GM12878 (cell line): ENCODE measurements at regions of chr4 and their contacts with region 1.

Region 1: GRCh38 chr4:22515145-22515887 is 550 bp downstream of the ADGRA3 start:
- DNase-seq: no peak
- ATAC-seq: peak; percentile 42
- H3K4me3 ChIP-seq: no peak overlapping the region
- H3K27ac ChIP-seq: no peak overlapping the region
- H3K4me1 ChIP-seq: no peaks in the 10 kb centered on the region
- H3K27me3 ChIP-seq: peaks cover 0 to 3% of the 10 kb centered on the region in 2 experiments; a peak in 1 of 4 replicates
- CTCF ChIP-seq: no peak; a peak in 1 of 6 replicates
- EP300 ChIP-seq: no peak
- POLR2A ChIP-seq: no peak
- RAD21 ChIP-seq: no peak

Region 2: DNA sequence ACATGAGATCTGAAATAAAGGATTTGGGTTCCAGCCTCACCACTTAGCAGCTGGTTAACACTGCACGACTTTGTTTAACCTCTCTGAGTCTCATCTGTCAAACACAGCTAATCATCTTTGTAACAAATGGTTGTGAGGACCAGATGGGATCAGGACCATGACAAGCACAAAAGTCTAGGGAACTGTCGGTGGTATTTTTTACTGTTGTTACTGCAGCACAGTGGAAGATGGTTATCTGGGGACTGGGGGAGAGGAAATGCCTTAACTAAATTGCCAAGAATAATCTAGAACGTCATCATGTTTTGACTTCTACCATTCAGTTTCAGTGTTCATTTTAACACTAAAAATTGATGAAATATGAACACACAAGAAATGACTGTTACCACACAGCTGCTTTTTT is 98.9 kb before region 1 on chr4:
- CTCF ChIA-PET with region 1: interaction called, 10 read pairs
- POLR2A ChIA-PET with region 1: no interaction called
- RAD21 ChIA-PET with region 1: interaction called, 3 read pairs
- SMC1A ChIA-PET with region 1: no interaction called
- in situ Hi-C with region 1: no loop called
- intact Hi-C with region 1: loop called (anchors 5 kb)
- DNase-seq: no peak
- ATAC-seq: no peak; the same call in 2 of the 3 replicates
- H3K4me3 ChIP-seq: no peak overlapping the region
- H3K27ac ChIP-seq: no peak overlapping the region
- H3K4me1 ChIP-seq: no peaks in the 10 kb centered on the region
- H3K27me3 ChIP-seq: no peaks in the 10 kb centered on the region
- CTCF ChIP-seq: no peak
- EP300 ChIP-seq: no peak
- POLR2A ChIP-seq: no peak
- RAD21 ChIP-seq: no peak

Region 3: GRCh38 chr4:22500831-22501719 is 14.2 kb before region 1 on chr4:
- CTCF ChIA-PET with region 1: interaction called, 6 read pairs
- POLR2A ChIA-PET with region 1: interaction called, 14 read pairs
- RAD21 ChIA-PET with region 1: interaction called, 12 read pairs
- SMC1A ChIA-PET with region 1: interaction called, 33 read pairs
- in situ Hi-C with region 1: no loop called
- intact Hi-C with region 1: no loop called
- DNase-seq: peak; percentile 28
- ATAC-seq: peak; percentile 77
- H3K4me3 ChIP-seq: no peak overlapping the region
- H3K27ac ChIP-seq: no peak overlapping the region
- H3K4me1 ChIP-seq: no peaks in the 10 kb centered on the region
- H3K27me3 ChIP-seq: no peaks in the 10 kb centered on the region
- CTCF ChIP-seq: no peak
- EP300 ChIP-seq: peak in 1 of 2 experiments; percentile 70; a peak in 1 of 4 replicates
- POLR2A ChIP-seq: no peak
- RAD21 ChIP-seq: no peak

Region 4: DNA sequence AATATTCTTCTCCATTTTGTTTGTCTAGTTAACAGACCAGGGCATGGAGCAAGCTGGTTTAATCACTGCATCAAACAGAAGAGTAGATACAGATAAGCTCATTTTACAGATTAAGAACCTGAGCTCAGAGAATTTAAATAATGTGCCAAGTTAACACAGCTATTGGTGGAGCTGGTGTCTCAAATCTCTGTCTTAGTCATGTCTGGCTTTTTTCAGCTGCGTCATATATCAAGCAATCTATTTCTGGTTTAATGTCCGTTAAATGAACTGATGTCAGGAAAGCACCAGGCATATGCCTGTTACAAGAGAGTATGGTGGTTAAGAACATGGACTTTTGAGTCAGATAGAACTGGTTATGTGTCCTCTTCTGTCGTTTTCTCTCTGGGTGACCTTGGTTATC is 80.4 kb after region 1 on chr4:
- CTCF ChIA-PET with region 1: interaction called, 7 read pairs
- POLR2A ChIA-PET with region 1: interaction called, 8 read pairs
- RAD21 ChIA-PET with region 1: interaction called, 7 read pairs
- SMC1A ChIA-PET with region 1: interaction called, 5 read pairs
- in situ Hi-C with region 1: no loop called
- intact Hi-C with region 1: loop called (anchors 5 kb)
- DNase-seq: peak; percentile 17
- ATAC-seq: peak; percentile 84
- H3K4me3 ChIP-seq: no peak overlapping the region
- H3K27ac ChIP-seq: no peak overlapping the region
- H3K4me1 ChIP-seq: no peaks in the 10 kb centered on the region
- H3K27me3 ChIP-seq: no peaks in the 10 kb centered on the region
- CTCF ChIP-seq: no peak
- EP300 ChIP-seq: peak; percentile 58 to 75; a peak in 2 of 4 replicates
- POLR2A ChIP-seq: no peak
- RAD21 ChIP-seq: no peak

Region 5: DNA sequence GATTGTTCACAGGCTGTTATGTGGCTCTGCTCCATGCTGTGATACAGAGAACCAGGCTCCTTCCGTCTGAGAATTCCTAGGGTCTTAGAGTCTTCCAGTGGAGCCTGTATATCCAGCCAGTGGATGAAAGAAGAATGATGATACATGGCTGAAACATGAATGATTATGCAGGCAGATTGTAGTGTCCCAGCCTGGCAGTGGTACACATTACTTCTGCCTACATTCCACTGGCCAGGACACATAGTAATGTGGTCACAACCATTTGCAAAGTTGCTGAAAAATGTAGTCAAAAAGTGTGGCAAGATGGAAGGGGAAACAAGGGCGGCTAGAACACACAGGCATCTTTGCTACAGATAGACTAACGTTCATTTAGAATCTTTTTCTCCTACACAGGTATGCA is 172.9 kb after region 1 on chr4:
- CTCF ChIA-PET with region 1: no interaction called
- POLR2A ChIA-PET with region 1: no interaction called
- RAD21 ChIA-PET with region 1: interaction called, 3 read pairs
- SMC1A ChIA-PET with region 1: no interaction called
- in situ Hi-C with region 1: no loop called
- intact Hi-C with region 1: loop called (anchors 5 kb)
- DNase-seq: no peak
- ATAC-seq: no peak
- H3K4me3 ChIP-seq: no peak overlapping the region
- H3K27ac ChIP-seq: no peak overlapping the region
- H3K4me1 ChIP-seq: no peaks in the 10 kb centered on the region
- H3K27me3 ChIP-seq: no peaks in the 10 kb centered on the region
- CTCF ChIP-seq: no peak
- EP300 ChIP-seq: no peak
- POLR2A ChIP-seq: no peak
- RAD21 ChIP-seq: no peak